Left ventricle myocardium superior (tissue), 1 donor: ENCODE measurements at regions of chr14 and their contacts with region 1.

Region 1: GRCh38 chr14:54347997-54348611 is 48.7 kb upstream of the CDKN3 start:
- DNase-seq: no peak
- ATAC-seq: peak; percentile 57

Region 2: GRCh38 chr14:53295985-53296582 is 1052.0 kb before region 1 on chr14:
- intact Hi-C with region 1: loop called (anchors 10 kb)
- DNase-seq: no peak
- ATAC-seq: no peak

Region 3: GRCh38 chr14:54396493-54397335 is 48.6 kb after region 1 on chr14 and contains the start of gene CDKN3:
- intact Hi-C with region 1: no loop called
- DNase-seq: peak; percentile 99
- ATAC-seq: peak; percentile 99
- total RNA-seq, gene CDKN3: 5.5 TPM